A549 (cell line): ENCODE measurements at regions of chr2 and their contacts with region 1.

Region 1: DNA sequence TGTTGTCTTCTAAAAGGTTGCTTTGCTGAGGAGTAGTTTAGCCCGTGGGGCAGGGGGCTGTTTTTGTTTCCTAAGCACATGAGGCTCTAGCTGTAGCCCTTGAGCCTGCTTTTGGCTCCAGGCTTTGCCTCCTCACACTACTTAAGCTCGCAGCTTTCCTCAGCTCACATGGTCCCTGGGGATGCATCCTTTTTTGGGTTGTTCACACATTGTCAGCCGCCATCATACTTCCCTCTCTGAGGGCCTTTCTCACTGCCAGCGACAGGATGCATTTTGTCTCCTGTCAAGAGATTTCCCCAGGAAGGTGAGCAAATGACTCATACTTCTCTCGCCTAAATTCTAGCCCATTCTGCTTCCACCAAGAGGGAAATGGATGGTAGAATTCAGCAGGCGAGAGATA is 279.5 kb upstream of the PKDCC start:
- DNase-seq: no peak
- ATAC-seq: no peak
- H3K4me3 ChIP-seq: no peak overlapping the region
- H3K27ac ChIP-seq: no peak overlapping the region
- H3K4me1 ChIP-seq: no peaks in the 10 kb centered on the region
- CTCF ChIP-seq: no peak
- EP300 ChIP-seq: no peak
- POLR2A ChIP-seq: no peak
- RAD21 ChIP-seq: no peak

Region 2: GRCh38 chr2:41720331-41720730 is 48.0 kb before region 1 on chr2:
- CTCF ChIA-PET with region 1: no interaction called
- POLR2A ChIA-PET with region 1: no interaction called
- DNase-seq: no peak
- ATAC-seq: no peak
- H3K4me3 ChIP-seq: no peak overlapping the region
- H3K27ac ChIP-seq: no peak overlapping the region
- H3K4me1 ChIP-seq: no peaks in the 10 kb centered on the region
- CTCF ChIP-seq: no peak
- EP300 ChIP-seq: no peak
- POLR2A ChIP-seq: no peak
- RAD21 ChIP-seq: no peak

Region 3: GRCh38 chr2:41779892-41780291 is 11.6 kb after region 1 on chr2:
- CTCF ChIA-PET with region 1: interaction called, 11 read pairs
- POLR2A ChIA-PET with region 1: no interaction called
- DNase-seq: no peak
- ATAC-seq: no peak
- H3K4me3 ChIP-seq: no peak overlapping the region
- H3K27ac ChIP-seq: no peak overlapping the region
- H3K4me1 ChIP-seq: no peaks in the 10 kb centered on the region
- CTCF ChIP-seq: no peak
- EP300 ChIP-seq: no peak
- POLR2A ChIP-seq: no peak
- RAD21 ChIP-seq: no peak